ENCODE measurements at regions of chr13 and their contacts with region 1.

Region 1: DNA sequence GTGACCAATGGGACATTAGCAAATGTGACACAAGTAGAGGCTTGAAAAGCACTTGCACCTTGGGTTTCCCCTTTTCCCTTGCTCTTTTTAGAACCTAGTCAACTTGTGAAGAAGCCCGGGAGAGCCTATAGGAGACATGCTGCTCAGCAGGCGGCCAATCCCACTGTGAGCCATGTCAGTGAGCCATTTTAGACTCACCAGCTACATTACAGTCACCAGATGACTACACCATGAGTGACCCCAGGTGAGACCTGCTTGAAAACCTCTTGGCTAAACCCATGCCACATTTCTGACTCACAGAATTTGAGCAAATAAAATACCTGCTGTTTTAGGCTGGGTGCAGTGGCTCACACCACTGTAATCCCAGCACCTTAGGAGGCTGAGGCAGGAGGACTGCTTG is 317.5 kb downstream of the KLF12 start:
- DNase-seq: no peak
- ATAC-seq: no peak
- H3K4me3 ChIP-seq: no peak overlapping the region
- H3K4me3 Mint-ChIP-seq: no peak overlapping the region
- H3K27ac ChIP-seq: no peak overlapping the region
- H3K27ac Mint-ChIP-seq: no peak overlapping the region
- H3K4me1 ChIP-seq: no peaks in the 10 kb centered on the region
- H3K4me1 Mint-ChIP-seq: peaks cover 55% of the 10 kb centered on the region
- H3K27me3 ChIP-seq: no peaks in the 10 kb centered on the region
- H3K27me3 Mint-ChIP-seq: no peaks in the 10 kb centered on the region
- CTCF ChIP-seq: no peak

Region 2: DNA sequence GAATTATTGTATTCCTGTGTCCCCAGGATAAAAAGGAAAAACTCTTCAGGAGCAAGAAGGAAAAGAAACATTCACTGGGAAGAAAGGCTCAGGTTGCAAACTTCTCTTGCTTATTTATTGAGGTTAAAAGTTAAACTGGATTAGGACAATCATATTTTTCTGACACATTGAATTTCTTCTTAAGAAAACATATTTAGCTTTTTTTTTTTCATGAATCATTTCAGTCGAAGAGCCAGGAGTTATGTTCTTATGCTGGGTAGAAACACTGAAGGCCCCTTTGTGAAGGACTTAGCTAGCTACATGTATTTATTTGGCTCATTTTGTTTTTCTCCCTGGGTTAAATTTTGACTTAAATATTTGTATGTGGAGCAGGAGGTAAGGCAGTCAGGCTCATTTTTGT is 323.9 kb before region 1 on chr13:
- CTCF ChIA-PET with region 1: no interaction called
- POLR2A ChIA-PET with region 1: no interaction called
- intact Hi-C with region 1: no loop called
- DNase-seq: no peak
- ATAC-seq: no peak
- H3K4me3 ChIP-seq: no peak overlapping the region
- H3K4me3 Mint-ChIP-seq: no peak overlapping the region
- H3K27ac ChIP-seq: no peak overlapping the region
- H3K27ac Mint-ChIP-seq: no peak overlapping the region
- H3K4me1 ChIP-seq: no peaks in the 10 kb centered on the region
- H3K4me1 Mint-ChIP-seq: no peaks in the 10 kb centered on the region
- H3K27me3 ChIP-seq: no peaks in the 10 kb centered on the region
- H3K27me3 Mint-ChIP-seq: no peaks in the 10 kb centered on the region
- CTCF ChIP-seq: no peak

Region 3: GRCh38 chr13:73803997-73804396 is 12.7 kb before region 1 on chr13:
- CTCF ChIA-PET with region 1: no interaction called
- POLR2A ChIA-PET with region 1: interaction called, 3 read pairs
- intact Hi-C with region 1: loop called in 1 of 2 experiments (anchors 2 kb)
- DNase-seq: no peak
- ATAC-seq: no peak
- H3K4me3 ChIP-seq: no peak overlapping the region
- H3K4me3 Mint-ChIP-seq: no peak overlapping the region
- H3K27ac ChIP-seq: no peak overlapping the region
- H3K27ac Mint-ChIP-seq: peak overlapping the region; percentile 1
- H3K4me1 ChIP-seq: peaks cover 6% of the 10 kb centered on the region
- H3K4me1 Mint-ChIP-seq: peaks cover 35% of the 10 kb centered on the region
- H3K27me3 ChIP-seq: no peaks in the 10 kb centered on the region
- H3K27me3 Mint-ChIP-seq: no peaks in the 10 kb centered on the region
- CTCF ChIP-seq: no peak